ENCODE measurements at regions of chr20 and their contacts with region 1.

Region 1: DNA sequence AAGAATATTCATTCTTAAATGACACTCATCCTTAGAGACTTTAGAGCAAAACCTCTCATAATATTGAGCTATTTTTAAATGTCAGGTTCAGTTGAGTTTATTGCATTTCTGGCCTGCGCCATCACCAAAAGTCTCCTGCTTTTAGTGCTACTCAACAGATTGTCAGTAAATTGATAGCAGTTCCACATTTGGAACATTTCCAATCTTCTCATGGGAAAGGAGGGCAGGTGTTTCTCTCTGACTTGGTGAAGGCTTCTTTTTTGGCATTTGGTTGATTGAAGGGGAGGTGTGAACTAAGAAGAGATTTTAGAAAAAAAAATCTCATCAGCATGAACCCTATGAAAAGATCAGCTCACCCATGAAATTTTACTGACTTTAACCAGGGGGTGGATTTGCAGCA is 125.9 kb upstream of the INSM1 start:
- DNase-seq: no peak
- H3K4me3 ChIP-seq: no peak overlapping the region
- H3K27ac ChIP-seq: no peak overlapping the region
- H3K4me1 ChIP-seq: no peaks in the 10 kb centered on the region
- H3K27me3 ChIP-seq: no peaks in the 10 kb centered on the region
- CTCF ChIP-seq: no peak

Region 2: DNA sequence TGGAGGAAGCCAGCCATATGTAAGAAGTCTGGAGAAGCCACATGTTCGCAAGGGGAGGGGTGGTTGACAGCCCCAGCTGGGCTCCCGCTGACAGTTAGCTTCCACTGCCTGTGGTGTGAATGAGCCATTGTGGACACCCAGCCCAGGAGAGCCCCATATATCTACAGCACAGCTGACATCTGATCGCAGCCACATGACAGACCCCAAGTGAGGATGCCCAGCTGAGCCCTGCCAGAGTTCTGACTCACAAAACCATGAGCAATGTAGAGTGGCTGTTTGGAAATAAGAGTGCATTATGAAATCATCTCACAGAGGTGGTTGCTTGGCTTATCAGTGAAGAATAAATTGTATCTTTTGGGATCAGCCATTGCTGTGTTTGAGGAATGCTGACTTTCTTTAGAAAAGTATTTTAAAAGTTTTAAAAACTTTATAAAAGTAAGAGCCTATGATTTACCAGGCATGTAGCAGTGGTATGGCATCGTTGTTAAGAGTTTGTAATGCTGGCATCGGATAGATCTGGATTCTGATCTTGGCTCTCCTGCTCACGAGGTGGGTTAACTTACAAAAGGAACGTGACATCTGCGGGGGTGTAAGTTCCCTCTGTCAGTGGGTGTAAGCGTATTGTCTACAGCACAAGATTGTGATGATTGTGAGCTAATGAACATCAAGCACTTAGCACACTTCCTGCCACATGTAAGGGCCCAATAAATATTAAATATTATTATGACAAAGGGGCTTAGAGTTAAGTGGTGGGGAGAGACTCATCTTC is 165.5 kb before region 1 on chr20:
- intact Hi-C with region 1: loop called (anchors 10 kb)
- DNase-seq: no peak
- H3K4me3 ChIP-seq: no peak overlapping the region
- H3K27ac ChIP-seq: no peak overlapping the region
- H3K4me1 ChIP-seq: no peaks in the 10 kb centered on the region
- H3K27me3 ChIP-seq: no peaks in the 10 kb centered on the region
- CTCF ChIP-seq: no peak

Region 3: GRCh38 chr20:20303742-20304141 is 61.8 kb after region 1 on chr20:
- intact Hi-C with region 1: loop called (anchors 10 kb)
- DNase-seq: peak; percentile 41 to 65
- H3K4me3 ChIP-seq: no peak overlapping the region
- H3K27ac ChIP-seq: no peak overlapping the region
- H3K4me1 ChIP-seq: no peaks in the 10 kb centered on the region
- H3K27me3 ChIP-seq: no peaks in the 10 kb centered on the region
- CTCF ChIP-seq: no peak

Measured in tibial artery (tissue), 4 donors.